PC-3 (cell line): ENCODE measurements at regions of chr1 and their contacts with region 1.

Region 1: DNA sequence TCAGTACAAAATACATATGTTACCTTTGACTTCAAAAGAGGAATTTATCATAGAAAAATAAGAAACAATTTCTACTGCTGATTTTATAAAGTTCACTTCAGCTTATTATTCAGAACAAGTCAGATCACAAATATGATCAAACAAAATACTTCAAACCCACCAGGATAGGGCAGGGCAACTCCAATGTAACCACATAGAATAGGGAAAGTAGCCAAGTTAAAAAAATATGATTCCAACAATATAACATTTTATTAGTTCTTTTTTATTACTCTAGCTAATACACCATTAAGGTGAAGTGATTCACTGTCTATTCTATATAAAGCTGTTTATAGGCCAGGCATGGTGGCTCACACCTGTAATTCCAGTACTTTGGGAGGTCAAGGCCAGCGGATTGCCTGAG is 54.6 kb upstream of the ZNHIT6 start:
- DNase-seq: peak; percentile 88
- ATAC-seq: peak; percentile 89
- H3K4me3 ChIP-seq: no peak overlapping the region
- H3K27ac ChIP-seq: peak overlapping the region; percentile 68
- H3K4me1 ChIP-seq: peaks cover 16% of the 10 kb centered on the region
- H3K27me3 ChIP-seq: no peaks in the 10 kb centered on the region
- CTCF ChIP-seq: no peak

Region 2: GRCh38 chr1:85801520-85801919 is 38.7 kb after region 1 on chr1:
- CTCF ChIA-PET with region 1: no interaction called
- POLR2A ChIA-PET with region 1: no interaction called
- intact Hi-C with region 1: loop called (anchors 5 kb)
- DNase-seq: peak; percentile 71
- ATAC-seq: peak; percentile 96
- H3K4me3 ChIP-seq: no peak overlapping the region
- H3K27ac ChIP-seq: peak overlapping the region; percentile 25
- H3K4me1 ChIP-seq: peaks cover 11% of the 10 kb centered on the region
- H3K27me3 ChIP-seq: no peaks in the 10 kb centered on the region
- CTCF ChIP-seq: no peak

Region 3: DNA sequence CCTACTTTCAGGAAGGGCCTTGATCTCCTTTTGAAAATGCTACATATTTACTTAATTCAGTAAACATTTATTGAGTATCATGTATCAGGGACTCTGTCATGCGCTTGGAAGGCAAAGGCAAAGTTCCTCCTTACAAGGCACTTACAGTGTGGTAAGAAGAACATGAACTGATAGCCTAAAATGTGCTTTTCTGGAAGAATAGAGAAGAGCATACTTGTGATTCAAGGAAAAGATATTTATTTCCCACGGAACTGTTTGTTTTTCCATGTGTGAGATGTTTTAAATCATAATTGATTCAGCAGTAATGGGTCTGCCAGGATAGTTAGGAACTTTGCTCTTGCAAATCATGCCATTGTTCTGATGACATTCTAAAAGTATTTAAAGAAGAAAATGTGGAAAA is 55.6 kb after region 1 on chr1:
- CTCF ChIA-PET with region 1: no interaction called
- POLR2A ChIA-PET with region 1: interaction called, 8 read pairs
- intact Hi-C with region 1: loop called (anchors 1 kb)
- DNase-seq: peak; percentile 89
- ATAC-seq: peak; percentile 95
- H3K4me3 ChIP-seq: peak overlapping the region; percentile 6
- H3K27ac ChIP-seq: peak overlapping the region; percentile 78
- H3K4me1 ChIP-seq: peaks cover 53% of the 10 kb centered on the region
- H3K27me3 ChIP-seq: no peaks in the 10 kb centered on the region
- CTCF ChIP-seq: no peak

Region 4: DNA sequence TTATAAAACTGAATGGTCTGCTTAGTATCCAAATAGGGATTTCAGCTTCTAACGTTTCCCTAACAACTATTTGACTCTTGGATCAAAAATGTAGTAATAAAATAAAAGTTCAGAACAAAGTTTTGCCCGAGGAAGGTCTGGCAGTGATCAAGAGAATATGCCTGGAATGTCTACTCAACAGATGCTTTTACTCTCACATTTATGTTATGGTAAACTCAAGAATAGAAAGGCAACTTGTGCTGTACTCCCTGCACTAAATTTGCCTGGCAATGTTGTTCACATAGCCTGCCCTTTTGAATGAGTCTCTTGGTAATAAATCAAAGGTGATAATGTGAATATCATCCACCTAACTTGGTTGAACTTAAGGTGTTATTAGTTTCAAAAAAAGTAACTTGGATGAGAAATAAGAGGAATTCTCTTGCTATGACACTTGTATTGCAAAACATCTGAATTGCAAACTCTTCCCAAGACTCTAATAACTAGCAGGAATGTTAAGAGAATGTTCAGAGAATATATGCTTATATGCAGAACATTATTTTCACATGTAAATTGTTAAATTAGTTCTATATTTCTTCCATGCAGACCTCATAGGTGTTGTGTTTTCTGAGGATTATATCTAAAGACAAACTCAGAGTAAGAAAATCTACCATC is 178.0 kb after region 1 on chr1:
- CTCF ChIA-PET with region 1: no interaction called
- POLR2A ChIA-PET with region 1: no interaction called
- intact Hi-C with region 1: no loop called
- DNase-seq: no peak
- ATAC-seq: no peak
- H3K4me3 ChIP-seq: no peak overlapping the region
- H3K27ac ChIP-seq: no peak overlapping the region
- H3K4me1 ChIP-seq: no peaks in the 10 kb centered on the region
- H3K27me3 ChIP-seq: peaks cover 43% of the 10 kb centered on the region
- CTCF ChIP-seq: no peak